ENCODE measurements at regions of chr15 and their contacts with region 1.

Region 1: DNA sequence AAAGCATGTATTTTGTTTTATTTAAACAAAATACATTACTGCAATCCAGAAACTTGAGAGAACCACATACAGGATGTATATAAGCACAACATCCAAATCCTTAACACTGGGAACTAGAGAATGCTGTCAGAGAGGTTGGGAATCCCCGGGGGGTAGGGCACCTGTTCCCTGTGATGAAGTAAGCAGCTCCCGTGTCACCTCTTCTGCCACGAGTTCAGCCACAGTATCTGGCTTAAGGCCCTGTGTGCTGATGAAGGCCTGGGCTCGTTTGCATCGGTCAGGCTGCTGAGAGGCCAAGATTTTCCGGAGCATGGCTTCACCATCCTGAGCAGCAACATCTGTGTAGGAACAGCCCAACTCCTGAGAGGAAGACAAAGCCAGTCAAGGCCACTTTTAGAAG is 36.4 kb downstream of the EIF3J start:
- DNase-seq: no peak
- ATAC-seq: no peak
- H3K4me3 ChIP-seq: no peak overlapping the region
- H3K27ac ChIP-seq: no peak overlapping the region
- H3K4me1 ChIP-seq: no peaks in the 10 kb centered on the region
- H3K27me3 ChIP-seq: no peaks in the 10 kb centered on the region
- CTCF ChIP-seq: no peak
- EP300 ChIP-seq: no peak
- POLR2A ChIP-seq: no peak
- RAD21 ChIP-seq: no peak

Region 2: GRCh38 chr15:44593042-44593736 is 19.8 kb after region 1 on chr15:
- CTCF ChIA-PET with region 1: no interaction called
- POLR2A ChIA-PET with region 1: no interaction called
- in situ Hi-C with region 1: no loop called
- intact Hi-C with region 1: no loop called
- DNase-seq: peak in 1 of 4 experiments; percentile 32
- ATAC-seq: peak; percentile 90
- H3K4me3 ChIP-seq: no peak overlapping the region
- H3K27ac ChIP-seq: no peak overlapping the region
- H3K4me1 ChIP-seq: no peaks in the 10 kb centered on the region
- H3K27me3 ChIP-seq: no peaks in the 10 kb centered on the region
- CTCF ChIP-seq: peak in 2 of 3 experiments; percentile 39 to 66; a peak in 4 of 6 replicates
- EP300 ChIP-seq: no peak
- POLR2A ChIP-seq: no peak
- RAD21 ChIP-seq: peak in 1 of 2 experiments; percentile 47; a peak in 3 of 4 replicates

Region 3: GRCh38 chr15:44718180-44718926 is 145.0 kb after region 1 on chr15:
- CTCF ChIA-PET with region 1: no interaction called
- POLR2A ChIA-PET with region 1: no interaction called
- in situ Hi-C with region 1: no loop called
- intact Hi-C with region 1: no loop called
- DNase-seq: no peak
- ATAC-seq: no peak
- H3K4me3 ChIP-seq: no peak overlapping the region
- H3K27ac ChIP-seq: no peak overlapping the region
- H3K4me1 ChIP-seq: peaks cover 0 to 4% of the 10 kb centered on the region in 2 experiments; a peak in 2 of 5 replicates
- H3K27me3 ChIP-seq: no peaks in the 10 kb centered on the region
- CTCF ChIP-seq: no peak
- EP300 ChIP-seq: no peak
- POLR2A ChIP-seq: no peak; the same call in 1 of the 2 replicates
- RAD21 ChIP-seq: no peak

Region 4: GRCh38 chr15:44780608-44781007 is 207.2 kb after region 1 on chr15:
- CTCF ChIA-PET with region 1: no interaction called
- POLR2A ChIA-PET with region 1: no interaction called
- in situ Hi-C with region 1: no loop called
- intact Hi-C with region 1: loop called (anchors 1 kb)
- DNase-seq: no peak
- ATAC-seq: no peak; the same call in 2 of the 3 replicates
- H3K4me3 ChIP-seq: no peak overlapping the region
- H3K27ac ChIP-seq: peak overlapping the region; percentile 61; the same call in 2 of the 3 replicates
- H3K4me1 ChIP-seq: peaks cover 2 to 26% of the 10 kb centered on the region in 2 experiments; a peak in 4 of 5 replicates
- H3K27me3 ChIP-seq: no peaks in the 10 kb centered on the region
- CTCF ChIP-seq: no peak
- EP300 ChIP-seq: no peak
- POLR2A ChIP-seq: no peak
- RAD21 ChIP-seq: no peak

Measured in K562 (cell line).